ENCODE measurements at regions of chr1 and their contacts with region 1.

Region 1: DNA sequence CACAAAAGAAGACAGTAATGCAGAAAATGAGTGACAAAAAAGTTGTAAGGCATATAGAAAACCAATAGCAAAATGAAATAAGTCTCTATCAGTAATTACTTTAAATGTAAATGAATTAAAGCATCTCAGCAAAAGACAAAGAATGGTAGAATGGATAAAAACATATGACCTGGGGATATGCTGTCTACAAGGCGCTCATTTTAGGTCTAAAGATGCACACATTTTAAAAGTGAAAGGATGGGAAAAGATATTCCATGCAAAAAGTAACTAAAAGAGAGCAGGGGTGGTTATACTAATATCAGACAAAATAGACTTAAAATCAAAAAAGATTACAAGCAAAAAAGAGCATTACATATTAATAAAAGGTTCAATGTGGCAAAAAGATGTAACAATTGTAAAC is 41.2 kb downstream of the SPATA6 start:
- DNase-seq: no peak
- ATAC-seq: no peak
- H3K4me3 ChIP-seq: no peak overlapping the region
- H3K27ac ChIP-seq: no peak overlapping the region
- H3K4me1 ChIP-seq: no peaks in the 10 kb centered on the region
- H3K27me3 ChIP-seq: no peaks in the 10 kb centered on the region
- CTCF ChIP-seq: no peak
- EP300 ChIP-seq: no peak
- POLR2A ChIP-seq: no peak
- RAD21 ChIP-seq: no peak

Region 2: GRCh38 chr1:50251702-50252101 is 1820.9 kb after region 1 on chr1:
- CTCF ChIA-PET with region 1: no interaction called
- POLR2A ChIA-PET with region 1: no interaction called
- in situ Hi-C with region 1: no loop called
- intact Hi-C with region 1: loop called (anchors 5 kb)
- DNase-seq: no peak
- ATAC-seq: no peak
- H3K4me3 ChIP-seq: no peak overlapping the region
- H3K27ac ChIP-seq: no peak overlapping the region
- H3K4me1 ChIP-seq: no peaks in the 10 kb centered on the region
- H3K27me3 ChIP-seq: no peaks in the 10 kb centered on the region
- CTCF ChIP-seq: no peak
- EP300 ChIP-seq: no peak
- POLR2A ChIP-seq: no peak
- RAD21 ChIP-seq: no peak